Tibial artery (tissue), 4 donors: ENCODE measurements at regions of chr20 and their contacts with region 1.

Region 1: DNA sequence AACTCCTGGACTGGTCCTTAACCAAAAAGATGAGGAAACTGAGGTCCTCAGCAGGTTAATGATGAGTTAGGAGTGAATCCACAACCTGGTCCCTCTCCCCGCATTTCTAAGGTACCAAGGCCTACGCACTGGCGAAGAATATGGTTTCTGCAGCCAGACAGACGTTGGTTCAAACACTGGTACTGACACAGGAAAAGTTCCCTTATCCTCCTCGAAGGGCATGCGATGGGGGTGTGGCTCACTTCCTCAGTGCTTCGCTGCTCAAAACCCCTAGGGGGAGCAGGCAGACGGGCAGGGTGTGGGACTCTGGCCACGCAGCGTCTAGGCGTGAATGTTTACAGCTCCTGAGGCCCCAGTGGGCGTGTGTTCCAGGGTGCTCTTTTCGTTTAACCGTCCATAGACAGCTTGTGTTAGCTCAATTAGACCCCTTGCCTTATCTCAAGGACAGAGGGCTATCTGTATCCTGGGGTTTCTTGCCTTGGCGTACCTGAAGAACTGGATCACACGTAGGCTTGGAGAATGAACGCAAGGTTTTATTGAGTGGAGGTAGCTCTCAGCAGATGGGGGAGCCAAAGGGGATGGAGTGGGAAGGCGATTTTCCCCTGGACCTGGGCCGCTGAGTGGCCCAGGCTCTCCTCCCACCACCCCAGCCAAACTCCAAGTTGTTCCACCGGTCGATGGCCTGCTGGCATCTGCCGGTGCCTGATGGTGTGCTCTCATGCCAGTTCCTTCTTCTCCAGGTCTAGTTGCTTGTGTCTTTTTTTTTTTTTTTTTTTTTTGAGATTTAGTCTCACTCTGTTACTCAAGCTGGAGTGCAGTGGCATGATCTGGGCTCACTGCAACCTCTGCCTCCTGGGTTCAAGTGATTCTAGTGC is 31.8 kb upstream of the PTPN1 start:
- DNase-seq: peak; percentile 60 to 79
- H3K4me3 ChIP-seq: no peak overlapping the region
- H3K27ac ChIP-seq: no peak overlapping the region
- H3K4me1 ChIP-seq: peaks cover 0 to 10% (median 1%) of the 10 kb centered on the region in 4 donors
- H3K27me3 ChIP-seq: no peaks in the 10 kb centered on the region
- CTCF ChIP-seq: peak; percentile 58 to 64

Region 2: GRCh38 chr20:50575847-50576720 is 97.7 kb after region 1 on chr20:
- intact Hi-C with region 1: loop called (anchors 5 kb)
- DNase-seq: peak; percentile 64 to 75
- H3K4me3 ChIP-seq: no peak overlapping the region
- H3K27ac ChIP-seq: no peak overlapping the region
- H3K4me1 ChIP-seq: peaks cover 0 to 39% (median 15%) of the 10 kb centered on the region in 4 donors
- H3K27me3 ChIP-seq: no peaks in the 10 kb centered on the region
- CTCF ChIP-seq: peak; percentile 63 to 69